ENCODE measurements at regions of chr12 and their contacts with region 1.

Region 1: DNA sequence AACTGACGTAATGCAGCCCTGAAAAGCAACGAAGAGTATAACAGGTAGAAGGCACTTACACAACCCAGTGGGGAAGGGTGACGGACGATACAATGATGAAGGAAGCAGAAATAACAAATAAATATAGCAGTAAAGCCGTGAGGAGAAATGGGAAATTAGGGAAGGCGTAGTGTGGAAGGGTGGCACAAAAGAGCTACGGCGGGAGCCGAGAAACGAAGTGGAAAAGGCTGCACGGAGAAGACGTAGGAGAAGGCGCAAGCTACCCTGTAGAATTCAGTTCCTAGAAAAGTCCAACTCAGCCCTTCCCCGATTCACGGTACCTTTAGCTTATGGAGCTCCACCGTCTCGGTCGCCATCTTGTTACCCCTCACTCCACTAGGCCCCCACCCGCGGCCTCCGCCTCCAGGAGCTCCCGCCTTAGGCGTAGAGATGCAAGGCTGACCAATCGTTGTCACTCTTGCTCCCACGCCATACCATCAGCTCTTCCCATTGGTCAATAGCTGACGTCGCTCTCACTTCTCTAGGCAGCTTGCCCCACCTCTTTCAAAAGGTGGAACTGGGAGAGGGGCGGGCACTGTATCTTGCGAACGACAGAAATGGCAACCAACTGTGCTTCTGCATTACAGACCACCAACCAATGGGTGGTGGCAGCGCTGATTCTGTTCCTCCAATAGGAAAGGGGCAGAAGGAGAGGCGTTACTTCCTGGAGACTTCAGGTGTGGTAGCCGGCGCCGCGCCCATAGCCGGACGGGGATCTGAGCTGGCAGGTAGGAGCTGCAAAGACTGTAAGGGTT is at the starts of genes ORMDL2 and SARNP:
- DNase-seq: peak; percentile 98
- H3K4me3 Mint-ChIP-seq: no peak within 1 kb of the TSS
- H3K27ac Mint-ChIP-seq: no peak within 1 kb of the TSS
- H3K4me1 Mint-ChIP-seq: peaks cover 47% of the 10 kb centered on the region
- H3K27me3 Mint-ChIP-seq: no peaks in the 10 kb centered on the region
- total RNA-seq, gene ORMDL2: 56.3 to 60.2 TPM
- total RNA-seq, gene SARNP: 88.3 to 88.6 TPM

Region 2: DNA sequence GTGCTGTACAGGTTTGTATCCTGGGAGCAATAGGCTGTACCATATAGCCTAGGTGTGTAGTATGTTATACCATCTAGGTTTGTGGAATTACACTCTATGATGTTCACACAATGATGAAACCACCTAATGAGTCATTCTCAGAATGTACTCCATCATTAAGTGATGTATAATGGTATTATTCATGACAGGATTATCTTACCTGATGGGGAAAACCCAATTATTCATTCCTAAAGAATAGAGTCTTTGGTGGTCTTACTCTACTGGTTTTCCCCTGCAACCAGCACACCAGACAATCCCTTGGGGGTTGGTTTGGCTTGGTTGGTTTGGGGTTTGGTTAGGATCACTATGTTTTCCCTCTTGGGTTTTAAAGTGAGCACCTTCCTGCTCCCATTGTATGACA is 193.5 kb before region 1 on chr12:
- CTCF ChIA-PET with region 1: no interaction called
- POLR2A ChIA-PET with region 1: no interaction called
- DNase-seq: no peak
- H3K4me3 Mint-ChIP-seq: no peak overlapping the region
- H3K27ac Mint-ChIP-seq: no peak overlapping the region
- H3K4me1 Mint-ChIP-seq: peaks cover 6% of the 10 kb centered on the region
- H3K27me3 Mint-ChIP-seq: peaks cover 17% of the 10 kb centered on the region

Region 3: GRCh38 chr12:55728939-55729823 is 88.4 kb before region 1 on chr12 and contains the start of gene CD63:
- CTCF ChIA-PET with region 1: interaction called, 7 read pairs
- POLR2A ChIA-PET with region 1: interaction called, 20 read pairs
- DNase-seq: peak; percentile 67
- H3K4me3 Mint-ChIP-seq: peak within 1 kb of the TSS; percentile 87
- H3K27ac Mint-ChIP-seq: peak within 1 kb of the TSS; percentile 85
- H3K4me1 Mint-ChIP-seq: peaks cover 44% of the 10 kb centered on the region
- H3K27me3 Mint-ChIP-seq: no peaks in the 10 kb centered on the region
- total RNA-seq, gene CD63: 177 to 185 TPM

Region 4: GRCh38 chr12:55829967-55830600 is 12.5 kb after region 1 on chr12:
- CTCF ChIA-PET with region 1: interaction called, 22 read pairs
- POLR2A ChIA-PET with region 1: interaction called, 105 read pairs
- DNase-seq: peak; percentile 50
- H3K4me3 Mint-ChIP-seq: peak overlapping the region; percentile 99
- H3K27ac Mint-ChIP-seq: peak overlapping the region; percentile 94
- H3K4me1 Mint-ChIP-seq: peaks cover 54% of the 10 kb centered on the region
- H3K27me3 Mint-ChIP-seq: no peaks in the 10 kb centered on the region

Region 5: DNA sequence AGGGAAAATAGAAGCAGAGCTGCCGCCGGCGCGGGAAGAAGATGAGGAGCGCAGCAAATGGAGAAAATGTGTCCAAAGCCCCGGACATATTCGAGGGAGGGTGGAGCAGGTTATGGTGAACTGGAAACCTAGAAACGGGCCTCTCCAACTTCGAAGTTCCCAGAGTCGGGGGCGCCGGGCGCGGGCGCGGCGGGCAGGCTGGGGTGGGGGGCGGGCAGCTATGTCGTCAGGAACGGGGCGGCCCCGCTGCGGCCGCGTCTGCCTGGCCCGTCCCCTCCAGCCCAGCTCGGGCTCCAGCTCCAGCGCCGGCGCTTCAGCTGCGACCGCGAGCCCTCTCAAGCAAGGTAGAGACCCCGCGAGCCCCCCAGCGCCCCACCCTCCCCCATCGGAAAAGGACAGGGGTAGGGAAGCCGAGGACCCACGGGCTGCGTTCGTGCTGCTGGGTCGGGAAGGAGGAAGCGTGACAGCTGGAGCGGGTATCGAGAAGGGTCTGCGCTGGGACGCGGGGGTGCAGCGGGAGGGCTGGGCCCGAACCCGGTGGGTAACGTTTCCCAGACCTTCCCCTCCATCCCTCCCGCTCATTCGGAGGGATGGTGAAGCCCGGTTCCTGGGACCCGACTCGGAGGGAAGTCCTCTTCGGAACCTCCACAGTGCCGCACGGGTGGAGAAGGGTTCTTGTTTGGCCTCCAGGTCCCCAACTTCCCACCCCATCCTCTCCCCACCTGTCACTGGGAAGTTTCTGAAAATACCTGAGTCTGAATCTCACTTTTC is 114.4 kb after region 1 on chr12:
- CTCF ChIA-PET with region 1: interaction called, 51 read pairs
- POLR2A ChIA-PET with region 1: interaction called, 91 read pairs
- DNase-seq: peak; percentile 45
- H3K4me3 Mint-ChIP-seq: peak overlapping the region; percentile 91
- H3K27ac Mint-ChIP-seq: peak overlapping the region; percentile 96
- H3K4me1 Mint-ChIP-seq: peaks cover 64% of the 10 kb centered on the region
- H3K27me3 Mint-ChIP-seq: no peaks in the 10 kb centered on the region